Calu3 (cell line): ENCODE measurements at regions of chr15 and their contacts with region 1.

Region 1: DNA sequence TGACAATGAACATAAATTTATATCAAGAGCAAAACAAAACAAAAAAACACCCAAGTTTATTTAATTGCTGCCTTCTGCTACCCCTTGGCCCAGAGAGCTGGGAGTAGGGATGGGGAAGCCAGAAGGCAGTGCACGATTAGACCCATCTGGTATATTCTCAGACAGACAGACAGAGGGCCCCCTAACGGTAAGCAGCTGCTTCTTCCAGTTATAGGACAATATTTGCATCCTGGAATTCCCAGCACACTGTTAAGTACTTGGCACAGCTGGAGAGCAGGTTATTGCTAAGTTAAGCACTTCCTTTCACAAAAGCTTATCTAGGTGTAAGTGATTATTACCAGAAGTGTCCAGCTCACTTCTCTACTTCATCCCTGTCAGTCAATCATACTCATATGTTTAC is 39.3 kb downstream of the C2CD4B start:
- DNase-seq: peak; percentile 66
- H3K4me3 Mint-ChIP-seq: no peak overlapping the region
- H3K27ac Mint-ChIP-seq: peak overlapping the region; percentile 86
- H3K4me1 Mint-ChIP-seq: peaks cover 48% of the 10 kb centered on the region
- H3K27me3 Mint-ChIP-seq: no peaks in the 10 kb centered on the region
- CTCF ChIP-seq: peak; percentile 39

Region 2: GRCh38 chr15:61923173-61923572 is 202.6 kb before region 1 on chr15:
- CTCF ChIA-PET with region 1: no interaction called
- intact Hi-C with region 1: no loop called
- DNase-seq: no peak
- H3K4me3 Mint-ChIP-seq: no peak overlapping the region
- H3K27ac Mint-ChIP-seq: peak overlapping the region; percentile 2
- H3K4me1 Mint-ChIP-seq: no peaks in the 10 kb centered on the region
- H3K27me3 Mint-ChIP-seq: no peaks in the 10 kb centered on the region
- CTCF ChIP-seq: no peak

Region 3: DNA sequence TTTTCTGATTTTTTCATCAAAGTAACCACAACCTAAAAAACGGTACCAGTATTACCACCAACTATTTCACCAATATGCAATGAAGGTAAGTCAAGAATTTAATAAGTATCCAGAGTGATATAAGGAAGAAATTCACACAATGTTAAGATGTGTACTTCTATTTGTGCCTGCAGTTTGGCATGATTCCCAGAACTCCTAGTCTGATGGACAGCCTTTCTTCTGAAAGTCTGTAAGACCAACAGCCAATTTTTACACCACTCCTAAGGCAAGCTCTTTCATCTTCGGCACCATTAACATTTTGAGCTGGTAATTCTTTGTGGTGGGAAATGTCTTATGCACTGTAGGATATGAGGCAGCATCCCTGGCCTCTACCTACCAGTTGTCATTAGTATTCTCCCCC is 173.8 kb before region 1 on chr15:
- CTCF ChIA-PET with region 1: no interaction called
- intact Hi-C with region 1: no loop called
- DNase-seq: peak; percentile 7
- H3K4me3 Mint-ChIP-seq: no peak overlapping the region
- H3K27ac Mint-ChIP-seq: no peak overlapping the region
- H3K4me1 Mint-ChIP-seq: peaks cover 8% of the 10 kb centered on the region
- H3K27me3 Mint-ChIP-seq: no peaks in the 10 kb centered on the region
- CTCF ChIP-seq: no peak

Region 4: DNA sequence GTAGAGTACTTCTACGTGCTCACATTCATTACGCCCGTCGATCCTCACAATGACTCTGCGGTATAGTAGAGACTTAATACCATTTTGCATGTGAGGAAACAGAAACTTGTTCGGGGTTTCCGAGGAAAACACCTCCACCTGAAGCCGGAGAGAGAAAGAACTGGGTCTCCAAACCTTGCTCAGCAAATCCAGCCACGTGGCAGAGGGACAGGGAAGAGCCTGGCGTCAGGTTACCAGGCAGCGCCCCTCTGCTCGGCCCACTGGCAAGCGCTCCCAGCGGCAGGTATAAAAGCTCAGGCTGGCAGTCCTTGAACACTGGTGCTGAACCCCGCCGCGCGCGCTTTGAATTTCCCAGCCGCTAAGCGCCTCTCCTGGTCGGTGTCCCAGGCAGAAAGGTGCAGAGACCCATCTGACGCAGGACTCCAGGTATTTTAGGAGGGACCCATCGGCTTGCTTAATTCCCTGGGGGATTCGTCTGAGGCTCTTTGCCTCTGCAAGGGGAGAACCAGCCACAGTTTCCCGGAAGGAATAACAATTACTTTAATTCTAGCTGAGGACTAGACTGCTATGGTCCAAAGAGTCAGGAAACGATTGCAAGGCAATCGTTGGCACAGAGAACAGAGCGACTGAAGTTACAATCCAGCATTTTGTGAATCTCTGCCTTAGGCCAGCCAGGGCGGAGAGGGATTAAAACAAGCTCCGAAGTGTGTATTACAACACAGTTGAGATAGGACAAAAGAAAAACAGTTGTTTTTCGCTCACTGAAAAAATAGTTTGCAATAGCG is 58.9 kb before region 1 on chr15 and contains the start of gene C2CD4A:
- CTCF ChIA-PET with region 1: interaction called, 5 read pairs
- intact Hi-C with region 1: loop called (anchors 2 kb)
- DNase-seq: peak; percentile 96
- H3K4me3 Mint-ChIP-seq: peak within 1 kb of the TSS; percentile 89
- H3K27ac Mint-ChIP-seq: peak within 1 kb of the TSS; percentile 91
- H3K4me1 Mint-ChIP-seq: peaks cover 48% of the 10 kb centered on the region
- H3K27me3 Mint-ChIP-seq: no peaks in the 10 kb centered on the region
- CTCF ChIP-seq: no peak
- total RNA-seq, gene C2CD4A: 17.1 and 17.6 TPM in 2 replicates

Region 5: GRCh38 chr15:62109982-62110851 is 15.6 kb before region 1 on chr15:
- CTCF ChIA-PET with region 1: interaction called, 17 read pairs
- intact Hi-C with region 1: no loop called
- DNase-seq: peak; percentile 57
- H3K4me3 Mint-ChIP-seq: no peak overlapping the region
- H3K27ac Mint-ChIP-seq: peak overlapping the region; percentile 74
- H3K4me1 Mint-ChIP-seq: peaks cover 71% of the 10 kb centered on the region
- H3K27me3 Mint-ChIP-seq: no peaks in the 10 kb centered on the region
- CTCF ChIP-seq: no peak

Region 6: DNA sequence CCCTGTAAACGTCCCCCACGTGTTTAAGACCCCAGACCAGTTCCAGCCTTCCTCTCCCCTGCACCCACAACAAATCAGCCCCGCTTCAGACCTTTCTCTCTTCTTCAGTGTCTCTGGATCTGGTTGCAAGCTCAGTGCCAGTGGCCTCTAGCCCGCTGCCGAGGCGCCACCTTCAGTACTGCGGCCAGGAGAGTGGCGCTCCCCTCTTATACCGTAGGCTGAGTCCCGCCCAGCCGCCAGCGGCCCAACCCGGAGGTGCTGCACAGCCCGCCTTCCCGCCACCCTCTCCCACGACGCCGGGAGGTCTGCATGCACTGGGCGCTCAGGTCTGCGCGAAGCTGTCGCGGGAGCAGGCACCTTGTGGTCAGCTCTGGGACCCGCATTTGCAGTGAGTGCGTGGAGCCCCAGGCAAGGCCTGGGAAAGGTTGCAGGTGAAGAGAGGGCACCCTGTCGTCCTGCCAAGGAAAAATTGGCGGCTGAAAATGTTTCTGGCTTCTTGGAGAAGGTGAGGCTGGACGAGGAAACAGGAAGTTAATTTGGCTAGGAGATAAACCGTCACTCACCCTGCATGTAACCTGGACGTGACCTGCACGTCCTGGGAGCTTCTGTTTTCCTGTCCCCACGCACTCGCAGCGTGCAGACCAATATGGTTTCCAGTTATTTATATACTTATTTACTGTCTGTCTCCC is 39.5 kb after region 1 on chr15 and contains the start of gene C2CD4B:
- CTCF ChIA-PET with region 1: no interaction called
- intact Hi-C with region 1: loop called (anchors 2 kb)
- DNase-seq: peak; percentile 97
- H3K4me3 Mint-ChIP-seq: peak within 1 kb of the TSS; percentile 94
- H3K27ac Mint-ChIP-seq: peak within 1 kb of the TSS; percentile 96
- H3K4me1 Mint-ChIP-seq: peaks cover 42% of the 10 kb centered on the region
- H3K27me3 Mint-ChIP-seq: no peaks in the 10 kb centered on the region
- CTCF ChIP-seq: no peak
- total RNA-seq, gene C2CD4B: 18.8 and 29.9 TPM in 2 replicates

Region 7: GRCh38 chr15:62209821-62210220 is 84.0 kb after region 1 on chr15:
- CTCF ChIA-PET with region 1: no interaction called
- intact Hi-C with region 1: loop called (anchors 5 kb)
- DNase-seq: peak; percentile 70
- H3K4me3 Mint-ChIP-seq: peak overlapping the region; percentile 65
- H3K27ac Mint-ChIP-seq: peak overlapping the region; percentile 85
- H3K4me1 Mint-ChIP-seq: peaks cover 31% of the 10 kb centered on the region
- H3K27me3 Mint-ChIP-seq: no peaks in the 10 kb centered on the region
- CTCF ChIP-seq: no peak

Region 8: DNA sequence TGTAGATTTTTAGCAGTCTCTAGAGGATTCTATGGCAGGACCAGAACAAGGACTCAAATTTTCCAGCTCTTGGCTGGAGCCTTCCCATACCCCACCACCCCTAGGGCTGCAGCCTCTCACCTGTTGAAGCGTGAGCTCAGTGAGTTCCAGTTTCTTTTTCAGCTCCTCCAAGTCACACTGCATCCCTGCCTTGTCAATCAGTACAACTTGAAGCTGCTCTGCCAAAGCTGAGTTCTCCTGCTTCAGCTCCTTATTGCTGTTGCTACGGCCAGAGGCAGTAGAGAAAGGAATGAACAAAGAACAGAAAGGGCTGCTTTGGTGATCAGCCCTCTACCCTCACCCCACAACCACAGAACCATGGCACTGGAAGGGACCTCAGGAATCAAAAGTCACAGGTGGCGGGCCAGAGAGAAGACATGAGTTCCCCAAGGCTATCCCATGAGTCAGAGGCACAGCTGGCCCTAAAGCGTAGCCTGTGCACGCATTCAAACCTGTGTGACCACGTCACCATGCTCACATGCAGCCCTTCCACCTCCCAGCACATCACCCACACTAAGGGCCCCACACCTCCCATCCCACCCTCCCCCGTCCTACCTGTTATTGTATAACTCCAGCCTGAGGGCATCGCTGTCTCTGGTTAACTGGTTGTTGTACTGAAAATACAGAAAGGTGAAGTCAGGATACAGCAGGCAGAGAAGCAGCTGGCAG is 122.7 kb after region 1 on chr15:
- CTCF ChIA-PET with region 1: interaction called, 35 read pairs
- intact Hi-C with region 1: loop called (anchors 1 kb)
- DNase-seq: peak; percentile 71
- H3K4me3 Mint-ChIP-seq: peak overlapping the region; percentile 23
- H3K27ac Mint-ChIP-seq: peak overlapping the region; percentile 69
- H3K4me1 Mint-ChIP-seq: peaks cover 42% of the 10 kb centered on the region
- H3K27me3 Mint-ChIP-seq: no peaks in the 10 kb centered on the region
- CTCF ChIP-seq: no peak

Region 9: GRCh38 chr15:62506217-62506805 is 380.5 kb after region 1 on chr15:
- CTCF ChIA-PET with region 1: no interaction called
- intact Hi-C with region 1: no loop called
- DNase-seq: no peak
- H3K4me3 Mint-ChIP-seq: no peak overlapping the region
- H3K27ac Mint-ChIP-seq: no peak overlapping the region
- H3K4me1 Mint-ChIP-seq: peaks cover 23% of the 10 kb centered on the region
- H3K27me3 Mint-ChIP-seq: no peaks in the 10 kb centered on the region
- CTCF ChIP-seq: no peak